PC-9 (cell line): ENCODE measurements at regions of chr17 and their contacts with region 1.

Region 1: GRCh38 chr17:39199820-39200069 is 338 bp upstream of the RPL19 start:
- DNase-seq: peak; percentile 74 to 86
- H3K4me3 ChIP-seq: peak overlapping the region; percentile 76
- H3K27ac ChIP-seq: peak overlapping the region; percentile 98
- H3K4me1 ChIP-seq: peaks cover 37% of the 10 kb centered on the region
- H3K27me3 ChIP-seq: no peaks in the 10 kb centered on the region
- CTCF ChIP-seq: no peak

Region 2: DNA sequence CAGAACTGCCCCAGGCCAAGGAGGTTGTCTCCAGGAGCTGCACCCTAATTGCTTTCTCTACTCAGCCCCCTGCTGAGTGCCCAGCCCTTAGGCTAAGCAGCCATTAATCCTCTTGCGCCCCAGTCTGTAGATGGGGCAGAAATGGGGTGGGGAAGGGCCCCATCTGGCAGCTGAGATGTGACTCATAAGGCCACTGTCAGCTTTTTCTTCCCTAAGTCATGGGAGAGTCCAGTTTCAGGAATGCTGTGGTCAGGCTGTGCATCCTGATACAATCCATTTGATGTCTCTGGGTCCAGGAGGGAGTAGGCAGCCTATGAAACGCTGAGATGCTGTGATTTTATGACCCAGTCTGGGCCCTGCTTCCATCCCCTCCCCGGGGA is 60.6 kb before region 1 on chr17:
- CTCF ChIA-PET with region 1: no interaction called
- POLR2A ChIA-PET with region 1: interaction called, 22 read pairs
- intact Hi-C with region 1: no loop called
- DNase-seq: peak; percentile 86 to 89
- H3K4me3 ChIP-seq: no peak overlapping the region
- H3K27ac ChIP-seq: peak overlapping the region; percentile 30
- H3K4me1 ChIP-seq: peaks cover 19% of the 10 kb centered on the region
- H3K27me3 ChIP-seq: no peaks in the 10 kb centered on the region
- CTCF ChIP-seq: no peak

Region 3: GRCh38 chr17:39173526-39174274 is 26.0 kb before region 1 on chr17:
- CTCF ChIA-PET with region 1: interaction called, 5 read pairs
- POLR2A ChIA-PET with region 1: interaction called, 16 read pairs
- intact Hi-C with region 1: no loop called
- DNase-seq: no peak
- H3K4me3 ChIP-seq: no peak overlapping the region
- H3K27ac ChIP-seq: no peak overlapping the region
- H3K4me1 ChIP-seq: peaks cover 6% of the 10 kb centered on the region
- H3K27me3 ChIP-seq: no peaks in the 10 kb centered on the region
- CTCF ChIP-seq: no peak

Region 4: DNA sequence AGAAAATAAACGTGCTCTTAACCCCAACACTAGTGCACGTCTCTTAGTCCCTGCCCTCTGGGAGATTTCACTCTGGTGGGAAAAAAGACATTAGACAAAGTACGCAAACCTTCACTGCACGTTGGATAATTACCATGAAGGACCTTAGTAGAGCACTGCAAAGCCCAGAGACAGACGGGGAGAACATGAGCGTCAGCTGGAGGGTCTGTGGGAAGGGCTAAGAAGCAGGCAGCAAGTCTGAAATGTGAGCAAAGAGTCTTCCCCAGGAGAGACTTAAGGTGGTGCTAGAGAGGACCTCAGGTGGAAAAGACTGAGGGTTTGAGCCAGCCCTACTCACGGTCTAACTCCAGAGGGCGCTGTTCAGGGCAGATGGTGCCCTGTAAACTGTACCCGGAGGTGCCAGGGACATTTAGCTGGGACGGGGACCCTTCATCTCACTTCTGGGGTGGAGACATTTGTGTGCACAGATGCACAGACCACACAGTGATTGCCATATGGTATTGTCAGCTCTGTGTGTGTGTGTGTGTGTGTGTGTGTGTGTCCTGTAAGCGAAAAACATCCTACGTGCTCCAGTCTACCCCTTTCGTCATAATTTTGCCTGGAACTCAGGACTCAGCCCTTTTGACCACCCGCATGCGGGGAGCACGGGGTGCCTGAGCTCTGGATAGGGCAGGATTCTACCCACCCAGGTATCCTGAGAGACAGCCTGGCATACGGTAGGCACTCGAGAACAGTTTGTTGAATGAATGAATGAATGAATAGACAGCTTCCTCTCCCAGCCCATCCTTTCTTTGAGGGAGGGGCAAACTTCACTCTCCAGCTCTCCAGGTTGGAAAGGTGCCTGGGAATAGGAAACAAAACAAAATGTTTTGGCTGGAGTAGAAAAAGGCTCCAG is 36.1 kb after region 1 on chr17:
- CTCF ChIA-PET with region 1: interaction called, 10 read pairs
- POLR2A ChIA-PET with region 1: interaction called, 12 read pairs
- intact Hi-C with region 1: no loop called
- DNase-seq: no peak
- H3K4me3 ChIP-seq: no peak overlapping the region
- H3K27ac ChIP-seq: no peak overlapping the region
- H3K4me1 ChIP-seq: peaks cover 13% of the 10 kb centered on the region
- H3K27me3 ChIP-seq: no peaks in the 10 kb centered on the region
- CTCF ChIP-seq: peak; percentile 83

Region 5: DNA sequence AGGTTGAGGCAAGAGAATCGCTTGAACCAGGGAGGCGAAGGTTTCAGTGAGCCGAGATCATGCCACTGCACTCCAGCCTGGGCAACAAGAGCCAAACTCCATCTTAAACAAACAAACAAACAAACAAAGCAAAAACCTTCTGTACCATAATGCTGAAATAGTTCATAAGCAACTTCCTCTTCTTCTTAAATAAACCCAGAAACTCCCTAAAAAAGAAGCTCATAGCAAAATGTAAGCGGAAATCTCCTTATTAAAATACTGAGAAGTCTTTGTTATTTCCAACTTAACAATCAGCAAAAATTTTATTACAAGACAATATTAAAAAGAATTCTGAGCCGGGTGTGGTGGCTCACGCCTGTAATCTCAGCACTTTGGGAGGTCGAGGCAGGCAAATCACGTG is 118.9 kb after region 1 on chr17:
- CTCF ChIA-PET with region 1: no interaction called
- POLR2A ChIA-PET with region 1: no interaction called
- intact Hi-C with region 1: no loop called
- DNase-seq: no peak
- H3K4me3 ChIP-seq: no peak overlapping the region
- H3K27ac ChIP-seq: no peak overlapping the region
- H3K4me1 ChIP-seq: no peaks in the 10 kb centered on the region
- H3K27me3 ChIP-seq: no peaks in the 10 kb centered on the region
- CTCF ChIP-seq: no peak

Region 6: GRCh38 chr17:39450847-39451581 is 251.3 kb after region 1 on chr17 and contains the start of gene MED1:
- CTCF ChIA-PET with region 1: no interaction called
- POLR2A ChIA-PET with region 1: interaction called, 19 read pairs
- intact Hi-C with region 1: no loop called
- DNase-seq: peak; percentile 90 to 92
- H3K4me3 ChIP-seq: peak within 1 kb of the TSS; percentile 95
- H3K27ac ChIP-seq: peak within 1 kb of the TSS; percentile 82
- H3K4me1 ChIP-seq: peaks cover 6% of the 10 kb centered on the region
- H3K27me3 ChIP-seq: no peaks in the 10 kb centered on the region
- CTCF ChIP-seq: no peak
- total RNA-seq, gene MED1: 23.2 and 35.7 TPM in 2 replicates

Region 7: DNA sequence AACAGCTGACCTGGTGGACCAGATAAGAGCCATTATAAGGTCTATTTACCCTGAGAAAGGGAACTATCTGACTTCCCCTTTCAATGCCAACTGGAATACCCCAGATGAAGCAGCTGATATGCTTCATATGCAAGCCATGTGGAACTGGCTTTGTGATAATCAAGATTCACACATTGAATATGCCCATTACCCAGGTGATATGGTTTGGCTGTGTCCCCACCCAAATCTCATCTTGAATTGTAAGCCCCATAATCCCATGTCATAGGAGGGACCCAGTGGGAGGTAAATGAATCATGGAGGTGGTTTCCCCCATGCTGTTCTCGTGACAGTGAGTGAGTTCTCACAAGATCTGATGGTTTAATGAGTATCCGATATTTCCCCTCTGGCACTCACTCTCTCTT is 622.3 kb after region 1 on chr17:
- CTCF ChIA-PET with region 1: no interaction called
- POLR2A ChIA-PET with region 1: no interaction called
- intact Hi-C with region 1: no loop called
- DNase-seq: no peak
- H3K4me3 ChIP-seq: no peak overlapping the region
- H3K27ac ChIP-seq: no peak overlapping the region
- H3K4me1 ChIP-seq: no peaks in the 10 kb centered on the region
- H3K27me3 ChIP-seq: no peaks in the 10 kb centered on the region
- CTCF ChIP-seq: no peak

Region 8: GRCh38 chr17:40909351-40909750 is 1709.6 kb after region 1 on chr17:
- CTCF ChIA-PET with region 1: no interaction called
- POLR2A ChIA-PET with region 1: no interaction called
- intact Hi-C with region 1: no loop called
- DNase-seq: peak; percentile 79 to 92
- H3K4me3 ChIP-seq: 0 out of 2 replicates have a peak overlapping the region, but pooled peaks have one; percentile 16
- H3K27ac ChIP-seq: peak overlapping the region; percentile 95
- H3K4me1 ChIP-seq: peaks cover 66% of the 10 kb centered on the region
- H3K27me3 ChIP-seq: no peaks in the 10 kb centered on the region
- CTCF ChIP-seq: peak; percentile 86